Psoas muscle (tissue), 8 donors: ENCODE measurements at regions of chr14 and their contacts with region 1.

Region 1: DNA sequence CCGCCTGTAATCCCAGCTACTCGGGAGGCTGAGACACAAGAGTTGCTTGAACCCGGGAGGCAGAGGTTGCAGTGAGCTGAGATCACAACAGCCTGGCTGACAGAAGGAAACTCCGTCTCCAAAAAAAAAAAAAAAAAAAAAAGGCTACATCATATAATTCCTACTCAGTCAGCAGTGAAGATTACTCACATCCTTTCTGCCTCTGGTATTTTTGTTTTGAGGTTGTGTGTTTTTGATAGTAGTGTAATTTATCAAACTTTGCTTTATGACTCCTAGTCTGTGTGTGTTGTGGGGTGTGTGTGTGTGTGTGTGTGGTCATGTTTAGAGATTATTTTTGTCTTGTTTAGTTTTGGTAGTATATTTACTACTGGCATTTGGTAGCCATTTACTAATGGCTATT is 29.8 kb upstream of the DLGAP5 start:
- DNase-seq: no peak
- ATAC-seq: no peak
- H3K4me3 ChIP-seq: no peak overlapping the region
- H3K27ac ChIP-seq: no peak overlapping the region
- H3K4me1 ChIP-seq: no peaks in the 10 kb centered on the region
- H3K27me3 ChIP-seq: no peaks in the 10 kb centered on the region
- CTCF ChIP-seq: no peak

Region 2: DNA sequence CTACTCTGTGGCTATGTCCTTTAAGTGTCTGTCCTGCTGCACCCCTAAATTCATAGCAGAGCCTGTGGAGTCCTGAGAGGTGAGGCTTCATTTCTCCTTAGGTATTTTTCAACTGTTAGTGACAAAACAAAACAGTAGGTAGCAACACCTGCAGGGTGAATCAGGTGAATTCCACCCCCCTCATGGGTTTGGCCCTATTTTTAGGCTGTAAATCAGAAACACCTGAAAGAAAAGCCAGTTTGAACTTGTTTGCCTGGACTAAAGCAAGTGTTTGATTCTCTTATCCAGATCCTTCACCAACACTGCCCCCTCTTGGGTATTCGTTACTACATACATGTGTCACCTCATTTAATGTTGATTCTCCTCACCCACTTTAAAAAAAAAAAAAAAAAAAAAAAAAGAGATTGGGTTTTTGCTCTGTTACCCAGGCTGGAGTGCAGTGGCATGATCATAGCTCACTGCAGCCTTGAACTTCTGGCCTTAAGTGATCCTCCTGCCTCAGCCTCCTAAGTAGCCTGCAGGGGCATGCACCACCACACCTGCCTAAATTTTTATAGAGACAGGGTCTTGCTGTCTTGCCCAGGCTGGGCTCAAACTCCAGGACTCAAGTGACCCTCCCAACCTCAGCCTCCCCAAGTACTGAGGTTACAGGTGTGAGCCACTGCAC is 209.0 kb after region 1 on chr14:
- intact Hi-C with region 1: loop called in 1 of 2 experiments (anchors 5 kb)
- DNase-seq: no peak
- ATAC-seq: peak; percentile 84 to 98 (median 91)
- H3K4me3 ChIP-seq: no peak overlapping the region
- H3K27ac ChIP-seq: peak overlapping the region; percentile 38
- H3K4me1 ChIP-seq: no peaks in the 10 kb centered on the region
- H3K27me3 ChIP-seq: no peaks in the 10 kb centered on the region
- CTCF ChIP-seq: peak; percentile 55

Region 3: GRCh38 chr14:55556929-55557623 is 335.9 kb after region 1 on chr14:
- intact Hi-C with region 1: no loop called
- DNase-seq: peak; percentile 82 to 93
- ATAC-seq: peak; percentile 98 to 99 (median 99)
- H3K4me3 ChIP-seq: peak overlapping the region; percentile 30
- H3K27ac ChIP-seq: peak overlapping the region; percentile 71
- H3K4me1 ChIP-seq: no peaks in the 10 kb centered on the region
- H3K27me3 ChIP-seq: no peaks in the 10 kb centered on the region
- CTCF ChIP-seq: no peak